Activated naive CD4-positive, alpha-beta T cell treated with anti-CD3 and anti-CD28 coated beads, Interleukin-2, amount 10 ng/mL, durations not matched to agents 7 days and 5 days (primary cell): ENCODE measurements at regions of chr11 and their contacts with region 1.

Region 1: GRCh38 chr11:32176223-32176934 is 85.5 kb downstream of the RCN1 start:
- DNase-seq: peak; percentile 85
- H3K4me3 Mint-ChIP-seq: no peak overlapping the region
- H3K27ac Mint-ChIP-seq: no peak overlapping the region
- H3K4me1 Mint-ChIP-seq: peaks cover 6% of the 10 kb centered on the region
- H3K27me3 Mint-ChIP-seq: peaks cover 39% of the 10 kb centered on the region

Region 2: DNA sequence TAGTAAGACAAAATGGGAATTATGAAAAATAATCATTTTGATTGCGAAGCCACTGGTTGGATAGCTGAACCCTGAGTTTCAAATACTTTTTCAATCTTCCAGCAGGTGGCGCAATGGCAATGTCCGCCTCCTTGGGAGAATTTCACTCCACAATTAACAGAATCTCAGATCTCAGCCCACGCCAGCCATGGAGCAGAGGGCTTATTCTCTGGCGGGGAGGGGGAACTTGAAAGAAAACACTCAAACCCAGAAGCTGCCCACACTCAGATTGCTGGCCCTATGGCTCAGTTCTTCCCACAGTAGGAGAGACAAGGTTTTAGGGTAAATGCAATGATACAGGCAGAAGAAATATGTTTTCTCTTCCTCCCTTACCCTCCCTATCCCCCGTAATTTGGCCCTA is 124.2 kb before region 1 on chr11:
- CTCF ChIA-PET with region 1: interaction called, 100 read pairs
- DNase-seq: peak; percentile 59
- H3K4me3 Mint-ChIP-seq: no peak overlapping the region
- H3K27ac Mint-ChIP-seq: no peak overlapping the region
- H3K4me1 Mint-ChIP-seq: no peaks in the 10 kb centered on the region
- H3K27me3 Mint-ChIP-seq: peaks cover 49% of the 10 kb centered on the region

Region 3: DNA sequence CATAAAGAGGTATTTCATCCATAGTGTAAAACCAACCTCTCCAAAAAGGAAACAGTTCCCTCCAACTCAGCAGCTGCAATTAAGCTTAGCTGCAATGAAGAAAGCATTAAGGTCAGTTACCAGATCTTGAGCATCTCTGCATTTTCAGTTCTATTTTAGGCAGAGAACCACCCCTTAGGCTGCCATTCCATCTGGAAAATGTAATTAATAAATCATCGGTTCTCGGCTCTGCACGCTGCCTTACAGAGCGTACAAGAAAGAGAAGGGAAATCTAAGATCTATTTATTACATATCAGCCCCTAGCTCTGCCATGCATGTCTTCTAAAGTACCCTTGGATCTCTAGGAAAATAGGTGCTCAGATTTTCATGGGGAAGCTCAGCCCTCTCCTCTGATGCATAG is 14.0 kb before region 1 on chr11:
- CTCF ChIA-PET with region 1: interaction called, 18 read pairs
- DNase-seq: no peak
- H3K4me3 Mint-ChIP-seq: no peak overlapping the region
- H3K27ac Mint-ChIP-seq: no peak overlapping the region
- H3K4me1 Mint-ChIP-seq: peaks cover 6% of the 10 kb centered on the region
- H3K27me3 Mint-ChIP-seq: peaks cover 22% of the 10 kb centered on the region